Heart left ventricle (tissue), 16 donors: ENCODE measurements at regions of chr18 and their contacts with region 1.

Region 1: GRCh38 chr18:33699372-33699771 is 121.4 kb downstream of the ASXL3 start:
- DNase-seq: no peak
- ATAC-seq: no peak
- H3K4me3 ChIP-seq: no peak overlapping the region
- H3K27ac ChIP-seq: no peak overlapping the region
- H3K4me1 ChIP-seq: no peaks in the 10 kb centered on the region
- H3K27me3 ChIP-seq: no peaks in the 10 kb centered on the region
- CTCF ChIP-seq: no peak
- POLR2A ChIP-seq: no peak

Region 2: GRCh38 chr18:33744032-33744955 is 44.9 kb after region 1 on chr18:
- intact Hi-C with region 1: loop called in 1 of 10 experiments (anchors 10 kb)
- DNase-seq: no peak
- ATAC-seq: no peak
- H3K4me3 ChIP-seq: no peak overlapping the region
- H3K27ac ChIP-seq: no peak overlapping the region
- H3K4me1 ChIP-seq: no peaks in the 10 kb centered on the region
- H3K27me3 ChIP-seq: no peaks in the 10 kb centered on the region
- CTCF ChIP-seq: no peak
- POLR2A ChIP-seq: no peak